Activated CD8-positive, alpha-beta T cell treated with anti-CD3 and anti-CD28 coated beads for 36 hours (primary cell): ENCODE measurements at regions of chr1 and their contacts with region 1.

Region 1: DNA sequence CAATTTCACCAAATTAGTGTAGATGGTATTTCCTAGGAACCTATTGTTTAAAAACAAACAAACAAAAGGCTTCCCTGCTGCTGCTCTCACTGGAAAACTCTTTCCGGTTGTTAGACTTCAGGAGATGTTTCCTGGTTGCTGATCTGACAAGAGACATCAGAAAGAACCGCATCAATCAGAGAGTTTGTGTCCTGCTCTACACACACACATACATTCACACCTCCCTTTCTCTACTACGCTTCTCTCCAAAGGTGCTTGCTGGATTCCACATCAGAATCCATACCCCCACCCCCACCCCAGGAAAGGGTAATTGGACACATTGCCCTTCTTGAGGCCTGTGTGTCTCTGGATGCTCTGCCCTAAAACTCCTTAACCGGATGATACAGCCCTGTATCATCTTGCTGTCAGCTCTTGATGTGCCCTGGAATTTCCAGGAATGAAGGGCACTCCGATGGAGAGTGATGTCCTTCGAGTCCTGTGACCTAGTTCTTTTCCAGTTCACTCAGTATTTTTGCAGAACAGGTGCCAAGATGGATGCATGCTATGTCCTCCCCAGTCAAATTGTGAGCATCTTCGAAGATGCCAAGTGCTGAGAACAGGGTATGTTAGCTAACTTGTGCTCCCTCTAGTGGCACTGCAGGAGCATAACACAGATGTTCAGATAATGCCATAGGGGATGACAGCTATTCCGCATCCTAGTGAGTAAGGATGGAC is 113.7 kb upstream of the SLC35F3 start:
- DNase-seq: peak; percentile 16
- ATAC-seq: peak; percentile 72
- H3K4me3 Mint-ChIP-seq: no peak overlapping the region
- H3K27ac Mint-ChIP-seq: no peak overlapping the region
- H3K4me1 Mint-ChIP-seq: no peaks in the 10 kb centered on the region
- H3K27me3 Mint-ChIP-seq: peaks cover 11% of the 10 kb centered on the region
- CTCF ChIP-seq: peak; percentile 83

Region 2: GRCh38 chr1:233394860-233395717 is 395.7 kb before region 1 on chr1:
- CTCF ChIA-PET with region 1: no interaction called
- POLR2A ChIA-PET with region 1: no interaction called
- intact Hi-C with region 1: loop called (anchors 2 kb)
- DNase-seq: peak; percentile 34
- ATAC-seq: peak; percentile 65
- H3K4me3 Mint-ChIP-seq: no peak overlapping the region
- H3K27ac Mint-ChIP-seq: no peak overlapping the region
- H3K4me1 Mint-ChIP-seq: no peaks in the 10 kb centered on the region
- H3K27me3 Mint-ChIP-seq: peaks cover 20% of the 10 kb centered on the region
- CTCF ChIP-seq: peak; percentile 80

Region 3: DNA sequence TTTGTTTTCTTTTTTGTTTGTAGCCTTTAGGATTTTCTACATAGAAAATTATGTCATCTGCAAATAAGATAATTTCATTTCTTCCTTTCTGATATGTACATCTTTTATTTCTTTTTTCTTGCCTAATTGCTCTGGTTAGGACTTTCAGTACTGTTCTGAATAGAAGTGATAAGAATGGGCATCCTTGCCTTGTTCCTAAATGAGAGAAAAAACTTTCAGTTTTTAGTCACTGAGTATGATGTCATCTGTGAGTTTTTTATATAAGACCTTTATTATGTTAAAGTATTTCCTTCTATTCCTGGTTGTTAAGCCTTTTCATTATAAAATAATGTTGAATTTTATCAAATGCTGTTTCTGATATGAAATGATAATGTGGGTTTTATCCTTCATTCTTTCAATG is 37.7 kb after region 1 on chr1:
- CTCF ChIA-PET with region 1: no interaction called
- POLR2A ChIA-PET with region 1: no interaction called
- intact Hi-C with region 1: no loop called
- DNase-seq: no peak
- ATAC-seq: no peak
- H3K4me3 Mint-ChIP-seq: no peak overlapping the region
- H3K27ac Mint-ChIP-seq: no peak overlapping the region
- H3K4me1 Mint-ChIP-seq: no peaks in the 10 kb centered on the region
- H3K27me3 Mint-ChIP-seq: no peaks in the 10 kb centered on the region
- CTCF ChIP-seq: no peak